ENCODE measurements at regions of chr1 and their contacts with region 1.

Region 1: GRCh38 chr1:110460253-110461220 is 9.6 kb downstream of the PROK1 start:
- DNase-seq: peak; percentile 88
- H3K4me3 Mint-ChIP-seq: no peak overlapping the region
- H3K27ac Mint-ChIP-seq: no peak overlapping the region
- H3K4me1 Mint-ChIP-seq: no peaks in the 10 kb centered on the region
- H3K27me3 Mint-ChIP-seq: no peaks in the 10 kb centered on the region

Region 2: DNA sequence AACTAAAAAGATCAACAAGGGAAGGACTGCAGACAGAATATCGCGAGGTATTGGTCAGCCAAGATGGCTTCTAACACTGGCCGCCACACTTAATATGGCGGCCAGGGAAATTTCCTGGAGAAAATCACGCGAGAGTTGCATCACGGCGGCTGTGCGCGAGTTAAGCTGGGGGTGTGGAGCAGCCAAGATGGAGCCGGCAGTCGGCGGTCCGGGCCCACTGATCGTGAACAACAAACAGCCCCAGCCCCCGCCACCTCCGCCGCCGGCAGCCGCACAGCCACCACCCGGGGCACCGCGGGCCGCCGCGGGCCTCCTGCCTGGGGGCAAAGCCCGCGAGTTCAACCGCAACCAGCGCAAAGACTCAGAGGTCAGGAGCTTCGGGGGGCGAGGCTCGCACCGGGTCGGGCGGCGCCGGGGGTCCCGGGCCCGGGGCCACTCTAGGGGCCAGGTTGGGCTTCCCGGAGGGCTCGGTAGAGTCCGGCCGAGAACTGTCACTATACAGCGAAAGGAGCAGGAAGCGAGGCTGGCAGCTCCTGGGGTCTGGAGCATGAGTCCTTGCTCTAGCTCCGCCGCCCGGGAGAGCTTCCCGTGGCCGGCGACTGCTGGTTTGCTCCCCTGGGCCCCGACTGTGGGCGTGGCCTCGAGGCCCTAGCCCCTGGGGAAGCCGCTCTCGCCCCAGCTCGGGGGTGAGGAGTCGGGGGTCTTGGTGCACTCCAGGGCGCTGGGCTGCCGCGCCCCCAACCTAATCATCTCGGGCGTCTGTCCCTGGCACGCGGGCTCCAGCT is 425.9 kb before region 1 on chr1 and contains the start of gene STRIP1:
- CTCF ChIA-PET with region 1: interaction called, 10 read pairs
- POLR2A ChIA-PET with region 1: no interaction called
- intact Hi-C with region 1: no loop called
- DNase-seq: peak; percentile 95
- H3K4me3 Mint-ChIP-seq: peak within 1 kb of the TSS; percentile 82
- H3K27ac Mint-ChIP-seq: peak within 1 kb of the TSS; percentile 92
- H3K4me1 Mint-ChIP-seq: peaks cover 59% of the 10 kb centered on the region
- H3K27me3 Mint-ChIP-seq: no peaks in the 10 kb centered on the region
- total RNA-seq, gene STRIP1: 22.7 to 25.7 TPM

Region 3: GRCh38 chr1:110196917-110197765 is 263.4 kb before region 1 on chr1:
- CTCF ChIA-PET with region 1: interaction called, 117 read pairs
- POLR2A ChIA-PET with region 1: interaction called, 3 read pairs
- intact Hi-C with region 1: loop called (anchors 1 kb)
- DNase-seq: peak; percentile 63
- H3K4me3 Mint-ChIP-seq: no peak overlapping the region
- H3K27ac Mint-ChIP-seq: no peak overlapping the region
- H3K4me1 Mint-ChIP-seq: no peaks in the 10 kb centered on the region
- H3K27me3 Mint-ChIP-seq: no peaks in the 10 kb centered on the region

Region 4: DNA sequence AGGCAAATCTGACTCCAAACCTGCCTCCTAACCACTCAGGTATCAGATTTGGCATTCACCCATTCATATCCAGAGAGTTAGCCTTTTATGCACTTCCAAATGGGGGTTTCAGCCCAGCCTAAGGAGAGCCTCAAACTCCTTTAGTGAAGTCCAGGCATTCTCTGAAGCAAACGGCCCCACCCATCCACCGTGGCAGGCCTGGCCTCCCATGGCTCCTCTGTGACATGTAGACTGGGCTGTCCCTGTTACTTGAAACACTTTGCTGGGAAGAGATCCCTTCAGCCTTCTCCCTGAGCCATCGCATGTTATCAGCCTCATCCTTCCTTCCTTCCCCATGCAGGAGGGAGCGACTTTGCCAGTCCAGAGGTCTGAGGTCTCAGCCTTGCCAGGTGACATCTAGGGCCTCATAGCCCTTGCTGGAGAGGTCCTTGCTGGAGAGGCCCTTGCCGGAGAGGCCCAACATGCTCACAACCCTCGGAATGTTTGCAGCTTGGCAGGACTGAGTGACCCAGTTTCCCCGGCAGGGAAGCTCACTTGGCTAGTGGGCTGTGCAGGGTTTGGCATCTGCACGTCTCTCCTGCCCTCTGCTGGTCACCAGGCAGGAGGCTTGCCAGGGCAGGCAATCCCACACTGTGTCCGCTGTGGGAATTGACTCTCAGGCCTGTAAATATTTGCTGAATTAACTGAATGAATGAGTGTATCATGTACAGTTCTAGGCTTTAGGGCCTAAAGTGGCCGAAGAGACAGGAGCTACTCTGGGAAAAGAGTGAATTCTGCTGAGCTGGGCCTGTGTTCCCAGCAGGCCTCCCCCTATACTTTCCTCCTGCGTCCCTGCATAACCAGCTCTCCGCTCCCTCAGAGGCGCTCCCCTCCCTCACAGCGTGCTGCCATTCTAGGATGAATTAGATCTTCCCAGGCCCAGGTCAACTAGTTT is 148.1 kb before region 1 on chr1:
- CTCF ChIA-PET with region 1: interaction called, 26 read pairs
- POLR2A ChIA-PET with region 1: no interaction called
- intact Hi-C with region 1: loop called (anchors 10 kb)
- DNase-seq: peak; percentile 81
- H3K4me3 Mint-ChIP-seq: no peak overlapping the region
- H3K27ac Mint-ChIP-seq: no peak overlapping the region
- H3K4me1 Mint-ChIP-seq: no peaks in the 10 kb centered on the region
- H3K27me3 Mint-ChIP-seq: no peaks in the 10 kb centered on the region

Region 5: DNA sequence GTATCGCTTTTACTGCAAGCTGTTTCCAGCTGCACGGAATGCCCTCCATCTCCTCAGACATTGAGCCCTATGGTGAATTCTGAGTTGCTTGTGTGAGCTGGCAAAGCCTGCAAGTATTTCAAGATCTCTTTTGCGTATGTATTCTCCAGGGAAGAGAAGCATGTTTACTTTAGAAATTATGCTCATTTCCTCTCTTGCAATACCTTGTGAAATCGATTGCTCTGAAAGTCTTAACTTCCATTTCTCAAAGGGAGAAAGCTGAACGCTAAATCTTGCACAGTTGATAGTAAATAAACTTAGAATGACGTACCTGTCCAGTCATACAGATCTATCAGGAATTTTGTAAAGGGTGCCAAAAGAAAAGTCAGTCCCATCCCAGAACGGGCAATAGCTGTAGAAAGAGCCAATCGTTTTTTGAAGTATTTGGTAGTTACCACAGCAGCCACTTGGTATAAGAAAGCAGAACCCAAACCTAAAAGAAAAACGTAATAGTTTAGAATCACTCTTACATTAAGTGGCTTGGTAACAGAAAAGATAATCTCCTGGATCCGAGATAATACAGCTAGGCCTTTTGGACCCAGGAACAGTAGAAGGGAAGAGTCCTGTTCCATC is 79.8 kb before region 1 on chr1:
- CTCF ChIA-PET with region 1: no interaction called
- POLR2A ChIA-PET with region 1: no interaction called
- intact Hi-C with region 1: no loop called
- DNase-seq: no peak
- H3K4me3 Mint-ChIP-seq: no peak overlapping the region
- H3K27ac Mint-ChIP-seq: no peak overlapping the region
- H3K4me1 Mint-ChIP-seq: peaks cover 14% of the 10 kb centered on the region
- H3K27me3 Mint-ChIP-seq: no peaks in the 10 kb centered on the region

Region 6: GRCh38 chr1:110407260-110408210 is 53.0 kb before region 1 on chr1 and contains the start of gene LAMTOR5:
- CTCF ChIA-PET with region 1: interaction called, 152 read pairs
- POLR2A ChIA-PET with region 1: interaction called, 7 read pairs
- intact Hi-C with region 1: loop called (anchors 1 kb)
- DNase-seq: peak; percentile 96
- H3K4me3 Mint-ChIP-seq: peak within 1 kb of the TSS; percentile 100
- H3K27ac Mint-ChIP-seq: peak within 1 kb of the TSS; percentile 97
- H3K4me1 Mint-ChIP-seq: peaks cover 17% of the 10 kb centered on the region
- H3K27me3 Mint-ChIP-seq: no peaks in the 10 kb centered on the region
- total RNA-seq, gene LAMTOR5: 151 to 153 TPM

Region 7: DNA sequence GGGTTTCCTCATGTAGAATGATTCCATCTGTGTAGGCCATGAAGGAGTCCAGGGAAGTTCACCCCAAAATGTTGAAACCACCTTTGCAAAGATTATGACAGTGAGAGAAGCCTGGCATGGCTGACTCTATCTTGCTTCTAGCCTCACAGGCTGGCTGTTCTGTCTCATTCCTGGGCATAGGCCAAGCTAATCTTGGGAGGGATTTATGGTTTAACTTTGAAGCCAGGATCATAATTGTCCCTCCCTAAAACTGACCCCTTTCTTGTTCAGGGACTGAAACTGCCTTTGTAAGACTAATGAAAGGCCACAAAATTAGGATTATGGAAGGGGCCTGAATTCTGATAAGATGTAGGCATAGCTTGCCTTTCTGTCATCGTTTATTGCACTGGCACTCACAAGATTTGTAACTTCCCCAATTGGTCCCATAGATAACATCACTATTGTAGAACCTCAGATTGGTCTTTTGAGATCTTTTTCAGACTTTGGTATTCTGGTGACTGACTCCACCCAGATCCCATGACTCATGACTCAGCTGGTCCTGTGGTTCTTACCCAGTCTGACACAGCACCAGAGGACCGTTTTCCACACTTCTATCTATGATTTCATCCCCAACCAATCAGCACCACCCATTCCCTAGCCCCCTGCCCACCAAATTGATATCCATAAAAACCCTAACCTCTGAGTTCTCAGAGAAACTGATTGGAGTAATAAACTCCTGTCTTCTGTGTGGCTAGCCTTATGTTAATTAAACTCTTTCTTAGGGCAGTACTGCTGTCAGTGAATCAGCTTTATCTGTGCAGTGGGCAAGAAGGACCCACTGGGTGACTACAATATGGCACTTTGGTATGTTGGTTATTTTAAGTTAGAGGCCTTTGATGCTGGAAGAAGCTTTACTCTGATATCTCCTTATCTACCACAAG is 39.4 kb before region 1 on chr1:
- CTCF ChIA-PET with region 1: interaction called, 152 read pairs
- POLR2A ChIA-PET with region 1: no interaction called
- intact Hi-C with region 1: no loop called
- DNase-seq: peak; percentile 30
- H3K4me3 Mint-ChIP-seq: no peak overlapping the region
- H3K27ac Mint-ChIP-seq: no peak overlapping the region
- H3K4me1 Mint-ChIP-seq: no peaks in the 10 kb centered on the region
- H3K27me3 Mint-ChIP-seq: no peaks in the 10 kb centered on the region

Region 8: DNA sequence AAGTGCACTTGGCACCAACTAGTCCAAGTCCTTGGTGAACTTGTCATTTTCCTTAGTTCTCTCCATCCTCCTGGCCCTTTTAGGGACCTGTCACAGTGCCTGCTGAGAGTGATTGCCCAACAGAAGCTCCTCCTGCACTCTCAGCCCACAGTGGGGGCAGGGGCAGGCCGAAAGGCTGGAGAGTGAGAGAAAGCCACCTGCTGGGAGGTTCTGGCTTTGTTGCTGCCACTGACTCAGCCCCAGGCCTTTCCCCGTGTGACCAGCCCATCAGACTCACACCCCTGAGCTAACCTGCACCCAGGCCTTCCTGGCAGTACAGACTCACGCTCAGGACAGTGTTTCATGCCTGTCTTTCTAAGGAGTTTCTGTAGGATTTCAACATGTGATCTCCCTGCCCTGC is 26.7 kb before region 1 on chr1:
- CTCF ChIA-PET with region 1: interaction called, 24 read pairs
- POLR2A ChIA-PET with region 1: no interaction called
- intact Hi-C with region 1: no loop called
- DNase-seq: peak; percentile 11
- H3K4me3 Mint-ChIP-seq: no peak overlapping the region
- H3K27ac Mint-ChIP-seq: no peak overlapping the region
- H3K4me1 Mint-ChIP-seq: no peaks in the 10 kb centered on the region
- H3K27me3 Mint-ChIP-seq: peaks cover 1% of the 10 kb centered on the region